ENCODE measurements at regions of chr4 and their contacts with region 1.

Region 1: DNA sequence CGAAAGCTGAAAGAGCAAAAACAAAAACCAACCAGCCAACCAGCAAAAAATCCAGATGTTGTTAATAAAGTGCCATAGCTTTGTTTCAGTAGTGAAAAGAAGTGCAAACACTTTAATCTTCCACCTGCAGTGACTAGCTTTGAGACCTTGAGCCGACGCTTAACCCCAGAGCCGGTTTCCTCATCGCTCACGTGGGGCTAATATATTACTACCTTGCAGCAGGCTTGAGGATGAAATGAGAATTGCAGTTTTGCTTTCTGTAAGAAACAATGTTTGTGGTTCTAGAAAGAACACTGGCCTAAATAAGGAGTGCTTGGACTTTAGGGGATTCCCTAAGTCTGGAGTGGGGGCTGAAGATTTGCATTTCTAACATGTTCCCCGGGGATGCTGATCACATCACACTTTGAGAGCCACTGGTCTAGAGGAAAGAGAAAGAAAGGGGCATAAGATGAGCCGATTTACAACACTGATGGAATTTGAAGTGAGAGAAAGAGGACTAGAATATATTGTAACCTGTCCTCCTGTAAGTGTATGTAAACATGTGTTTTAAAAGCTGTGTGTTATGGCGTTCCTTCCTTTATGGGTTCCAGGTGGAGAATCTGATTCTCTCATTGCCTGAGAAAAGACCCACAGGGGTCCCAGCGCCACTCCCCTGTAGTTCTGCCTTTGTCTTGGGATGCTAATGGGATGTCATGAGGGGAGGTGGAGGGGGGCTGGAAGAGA is 1.4 kb downstream of the FGF2 start:
- DNase-seq: peak; percentile 64 to 74
- H3K4me3 ChIP-seq: peak overlapping the region; percentile 78 to 83
- H3K27ac ChIP-seq: peak overlapping the region; percentile 93 to 96
- H3K4me1 ChIP-seq: peaks cover 0 to 57% (median 23%) of the 10 kb centered on the region in 4 donors
- H3K27me3 ChIP-seq: no peaks in the 10 kb centered on the region
- CTCF ChIP-seq: peak; percentile 45 to 60

Region 2: DNA sequence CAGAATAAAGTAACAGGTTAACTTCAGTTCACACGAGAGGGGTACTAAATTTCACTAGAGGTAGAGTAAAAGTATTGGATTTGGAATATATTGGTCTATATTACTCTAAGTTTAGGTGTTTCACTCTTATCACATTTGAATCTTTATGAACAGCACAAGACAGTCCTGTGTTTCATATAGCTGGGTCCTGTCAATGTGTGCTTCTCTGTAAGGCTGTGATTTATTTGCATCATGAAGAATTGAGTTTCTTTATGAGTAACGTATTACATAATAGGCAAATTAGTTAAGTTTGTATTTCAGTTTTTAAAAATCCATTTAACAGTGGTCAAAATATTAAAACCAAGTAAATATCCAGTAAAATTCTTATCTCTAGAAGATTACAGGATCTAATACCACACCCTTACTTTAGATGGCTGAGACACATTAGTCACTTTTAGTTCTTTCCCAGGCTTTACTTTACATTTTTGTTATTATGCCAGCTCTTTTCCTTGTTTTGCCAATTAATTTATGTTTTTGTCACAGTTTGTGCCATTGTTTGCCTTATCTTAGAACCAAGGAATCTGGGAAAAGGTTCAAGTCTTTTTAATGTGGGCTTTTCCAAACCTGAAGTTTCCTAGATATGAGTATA is 62.2 kb after region 1 on chr4:
- intact Hi-C with region 1: no loop called
- DNase-seq: no peak
- H3K4me3 ChIP-seq: no peak overlapping the region
- H3K27ac ChIP-seq: peak overlapping the region; percentile 3 to 39
- H3K4me1 ChIP-seq: peaks cover 0 to 18% (median 10%) of the 10 kb centered on the region in 4 donors
- H3K27me3 ChIP-seq: no peaks in the 10 kb centered on the region
- CTCF ChIP-seq: no peak

Region 3: DNA sequence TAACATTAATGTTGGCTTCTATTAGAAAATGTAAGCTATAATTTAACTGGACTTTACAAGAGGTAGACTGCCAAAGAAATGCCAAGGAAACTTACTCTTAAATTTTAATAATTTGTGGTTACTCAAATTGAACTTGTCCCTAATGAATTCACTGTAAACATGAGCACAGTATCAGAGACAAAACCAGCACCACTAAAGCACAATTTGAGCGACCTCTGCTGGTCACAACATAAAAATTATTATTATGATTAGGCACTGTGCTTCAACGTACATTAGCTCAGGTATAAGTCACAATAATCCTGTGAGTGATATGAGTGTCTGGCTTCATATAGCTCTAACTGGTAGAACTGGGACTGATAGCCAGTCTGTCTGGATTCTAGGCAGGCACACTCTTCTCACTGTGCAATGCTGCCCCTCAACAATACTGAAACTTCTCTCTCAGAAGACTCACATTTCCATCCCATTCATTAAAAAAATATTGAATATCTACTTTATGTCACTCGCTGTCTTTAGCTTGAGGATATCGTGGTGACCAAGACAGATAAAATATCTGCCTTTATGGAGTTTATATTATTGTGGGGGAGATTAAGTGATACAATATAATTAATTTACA is 86.4 kb after region 1 on chr4:
- intact Hi-C with region 1: loop called (anchors 10 kb)
- DNase-seq: no peak
- H3K4me3 ChIP-seq: no peak overlapping the region
- H3K27ac ChIP-seq: no peak overlapping the region
- H3K4me1 ChIP-seq: peaks cover 0 to 19% (median 0%) of the 10 kb centered on the region in 4 donors
- H3K27me3 ChIP-seq: no peaks in the 10 kb centered on the region
- CTCF ChIP-seq: peak; percentile 46 to 52

Measured in tibial artery (tissue), 4 donors.